BJ (cell line): ENCODE measurements at regions of chr6 and their contacts with region 1.

Region 1: DNA sequence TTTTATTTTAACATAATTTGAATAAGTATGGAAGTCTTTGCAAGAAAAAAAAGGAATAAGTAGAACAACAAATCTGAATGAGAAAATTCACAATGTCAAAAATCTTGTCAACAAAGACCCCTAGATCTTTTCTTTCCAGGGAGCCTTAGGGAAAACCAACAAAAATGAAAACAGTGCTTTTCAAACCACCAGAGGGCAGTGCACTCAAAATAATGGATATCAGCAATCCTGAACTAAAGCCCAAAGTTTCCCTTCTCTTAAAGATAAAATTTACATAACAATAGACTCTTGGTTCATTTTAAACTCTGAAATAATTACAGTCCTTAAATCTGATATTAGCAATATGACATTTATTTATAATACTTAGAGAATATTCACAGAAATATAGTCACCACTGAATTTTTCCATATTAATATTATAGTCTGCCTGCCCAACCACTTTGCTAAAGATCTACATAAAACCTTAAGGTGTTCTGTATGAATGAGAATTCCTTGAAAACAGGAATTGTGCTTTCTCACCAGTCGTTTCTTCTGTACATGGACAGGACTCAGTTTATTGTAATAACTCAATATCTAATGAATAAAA is 105.3 kb upstream of the BMP5 start:
- DNase-seq: no peak
- H3K4me3 ChIP-seq: no peak overlapping the region
- H3K27me3 ChIP-seq: peaks cover 2% of the 10 kb centered on the region
- CTCF ChIP-seq: peak; percentile 62

Region 2: DNA sequence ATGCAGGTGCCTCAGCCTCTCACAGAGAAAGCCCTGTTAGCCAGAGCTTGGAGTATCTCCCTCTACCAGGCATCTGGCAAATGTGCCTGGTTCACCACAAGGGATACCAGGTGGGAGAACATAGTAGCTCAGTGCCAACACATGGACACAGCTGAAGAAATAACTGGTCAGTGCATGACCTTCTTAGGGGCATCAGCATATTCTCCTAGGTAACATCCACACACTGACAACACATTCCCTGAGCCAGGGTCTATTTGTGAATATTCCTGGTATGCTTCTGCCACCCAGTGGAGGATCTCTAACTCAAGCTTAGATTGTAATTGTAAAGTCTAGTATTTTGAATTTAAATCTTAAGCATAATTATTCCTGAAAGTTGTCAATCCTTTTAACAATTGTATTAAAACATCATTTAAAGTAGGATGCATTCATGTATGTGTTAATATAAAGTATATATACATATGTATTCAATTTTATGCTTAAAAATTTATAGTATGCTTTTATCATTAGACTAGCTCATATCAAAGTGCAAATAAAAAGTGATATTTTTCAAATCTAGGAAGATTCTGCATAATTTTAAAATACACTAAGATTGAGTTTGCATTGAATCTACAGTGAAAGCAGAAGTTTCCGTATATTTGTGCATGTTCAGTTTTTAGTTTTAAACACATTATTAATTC is 311.9 kb after region 1 on chr6:
- CTCF ChIA-PET with region 1: interaction called, 70 read pairs
- POLR2A ChIA-PET with region 1: no interaction called
- DNase-seq: no peak
- H3K4me3 ChIP-seq: no peak overlapping the region
- H3K27me3 ChIP-seq: no peaks in the 10 kb centered on the region
- CTCF ChIP-seq: peak; percentile 55